Panc1 (cell line): ENCODE measurements at regions of chr2 and their contacts with region 1.

Region 1: GRCh38 chr2:20097879-20098714 is 46.7 kb upstream of the LAPTM4A start:
- DNase-seq: peak; percentile 89
- ATAC-seq: peak; percentile 94
- H3K4me3 ChIP-seq: no peak overlapping the region
- H3K27ac ChIP-seq: no peak overlapping the region
- H3K4me1 ChIP-seq: no peaks in the 10 kb centered on the region
- H3K27me3 ChIP-seq: no peaks in the 10 kb centered on the region
- CTCF ChIP-seq: peak; percentile 95

Region 2: GRCh38 chr2:19955544-19956422 is 142.3 kb before region 1 on chr2:
- CTCF ChIA-PET with region 1: interaction called, 5 read pairs
- POLR2A ChIA-PET with region 1: no interaction called
- in situ Hi-C with region 1: no loop called
- intact Hi-C with region 1: loop called (anchors 1 kb)
- DNase-seq: peak; percentile 24
- ATAC-seq: peak; percentile 99
- H3K4me3 ChIP-seq: no peak overlapping the region
- H3K27ac ChIP-seq: no peak overlapping the region
- H3K4me1 ChIP-seq: no peaks in the 10 kb centered on the region
- H3K27me3 ChIP-seq: no peaks in the 10 kb centered on the region
- CTCF ChIP-seq: peak; percentile 94

Region 3: GRCh38 chr2:19979932-19980331 is 118.2 kb before region 1 on chr2:
- CTCF ChIA-PET with region 1: no interaction called
- POLR2A ChIA-PET with region 1: no interaction called
- in situ Hi-C with region 1: no loop called
- intact Hi-C with region 1: no loop called
- DNase-seq: no peak
- ATAC-seq: no peak
- H3K4me3 ChIP-seq: no peak overlapping the region
- H3K27ac ChIP-seq: no peak overlapping the region
- H3K4me1 ChIP-seq: no peaks in the 10 kb centered on the region
- H3K27me3 ChIP-seq: no peaks in the 10 kb centered on the region
- CTCF ChIP-seq: no peak

Region 4: DNA sequence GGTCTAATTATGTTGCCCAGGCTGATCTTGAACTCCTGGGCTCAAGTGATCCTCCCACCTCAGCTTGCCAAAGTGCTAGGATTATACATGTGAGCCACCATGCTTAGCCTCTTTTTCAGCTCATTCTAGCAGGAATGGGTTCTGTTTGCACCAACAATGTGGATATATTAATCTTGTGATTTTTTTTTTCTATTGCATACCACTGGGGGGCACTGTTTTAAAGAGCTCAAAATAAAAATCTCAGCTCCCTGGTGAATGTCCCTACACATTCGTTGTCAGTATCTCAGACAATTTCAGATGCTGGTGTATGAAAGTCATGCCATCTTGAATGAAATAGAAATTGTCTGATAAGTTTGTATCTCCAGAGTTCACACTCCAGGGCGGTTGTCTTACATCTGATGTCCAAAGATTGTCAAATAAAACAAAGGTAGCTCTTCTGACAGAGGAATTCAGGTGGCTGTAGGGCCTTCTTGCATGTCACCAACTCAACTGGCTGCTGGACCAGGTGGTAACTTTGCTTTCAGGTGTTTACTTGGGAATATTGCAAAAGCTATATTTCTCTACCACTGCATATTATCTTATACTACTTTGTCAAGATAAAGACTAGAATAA is 82.5 kb before region 1 on chr2:
- CTCF ChIA-PET with region 1: interaction called, 6 read pairs
- POLR2A ChIA-PET with region 1: no interaction called
- in situ Hi-C with region 1: no loop called
- intact Hi-C with region 1: loop called (anchors 1 kb)
- DNase-seq: peak; percentile 47
- ATAC-seq: no peak
- H3K4me3 ChIP-seq: no peak overlapping the region
- H3K27ac ChIP-seq: no peak overlapping the region
- H3K4me1 ChIP-seq: no peaks in the 10 kb centered on the region
- H3K27me3 ChIP-seq: no peaks in the 10 kb centered on the region
- CTCF ChIP-seq: peak; percentile 77

Region 5: DNA sequence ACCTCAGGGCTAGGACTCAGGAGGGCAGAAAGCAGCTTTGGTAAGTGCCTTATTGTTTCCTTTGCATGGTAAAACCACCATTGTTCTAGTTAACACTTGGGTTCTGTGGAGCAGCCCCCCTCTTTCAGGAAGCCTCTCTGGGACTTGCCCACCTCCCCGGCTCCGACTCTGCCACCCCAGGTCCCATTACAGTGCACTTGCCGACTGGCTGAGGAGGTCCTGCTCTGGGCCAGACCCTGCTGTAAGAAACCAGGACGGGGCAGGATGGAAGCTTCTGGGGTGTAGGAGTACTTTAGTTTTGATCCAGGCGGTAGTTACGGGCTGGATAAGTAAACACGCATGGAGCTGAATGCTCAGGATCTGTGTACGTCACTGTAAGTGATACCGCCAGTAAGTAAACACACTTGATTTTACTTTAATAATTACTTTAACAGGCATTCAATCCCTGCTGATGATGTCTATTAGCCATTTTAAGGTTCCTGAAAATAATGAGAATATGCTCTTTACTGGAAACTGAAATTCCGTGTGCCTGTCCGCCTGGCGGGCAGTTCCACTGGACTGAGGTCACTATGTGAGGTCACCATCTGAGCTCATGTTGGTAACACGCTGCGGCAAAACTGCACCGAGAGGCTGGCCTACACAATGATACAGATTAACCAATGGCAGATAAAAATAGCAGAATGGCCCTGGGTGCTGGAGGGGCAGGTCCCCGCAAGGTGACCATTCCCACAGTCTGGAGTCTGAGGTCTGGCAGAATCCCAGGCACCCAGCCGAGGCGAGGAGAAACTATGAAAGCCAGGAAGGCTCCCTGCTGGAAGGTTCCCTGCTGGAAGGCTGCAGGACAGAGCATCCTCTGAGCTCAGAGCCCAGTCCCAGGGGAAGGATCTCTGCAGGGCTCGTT is 527.6 kb after region 1 on chr2:
- CTCF ChIA-PET with region 1: no interaction called
- POLR2A ChIA-PET with region 1: no interaction called
- in situ Hi-C with region 1: no loop called
- intact Hi-C with region 1: no loop called
- DNase-seq: no peak
- ATAC-seq: no peak
- H3K4me3 ChIP-seq: no peak overlapping the region
- H3K27ac ChIP-seq: no peak overlapping the region
- H3K4me1 ChIP-seq: no peaks in the 10 kb centered on the region
- H3K27me3 ChIP-seq: no peaks in the 10 kb centered on the region
- CTCF ChIP-seq: no peak